Transverse colon (tissue), 4 donors: ENCODE measurements at regions of chr2 and their contacts with region 1.

Region 1: DNA sequence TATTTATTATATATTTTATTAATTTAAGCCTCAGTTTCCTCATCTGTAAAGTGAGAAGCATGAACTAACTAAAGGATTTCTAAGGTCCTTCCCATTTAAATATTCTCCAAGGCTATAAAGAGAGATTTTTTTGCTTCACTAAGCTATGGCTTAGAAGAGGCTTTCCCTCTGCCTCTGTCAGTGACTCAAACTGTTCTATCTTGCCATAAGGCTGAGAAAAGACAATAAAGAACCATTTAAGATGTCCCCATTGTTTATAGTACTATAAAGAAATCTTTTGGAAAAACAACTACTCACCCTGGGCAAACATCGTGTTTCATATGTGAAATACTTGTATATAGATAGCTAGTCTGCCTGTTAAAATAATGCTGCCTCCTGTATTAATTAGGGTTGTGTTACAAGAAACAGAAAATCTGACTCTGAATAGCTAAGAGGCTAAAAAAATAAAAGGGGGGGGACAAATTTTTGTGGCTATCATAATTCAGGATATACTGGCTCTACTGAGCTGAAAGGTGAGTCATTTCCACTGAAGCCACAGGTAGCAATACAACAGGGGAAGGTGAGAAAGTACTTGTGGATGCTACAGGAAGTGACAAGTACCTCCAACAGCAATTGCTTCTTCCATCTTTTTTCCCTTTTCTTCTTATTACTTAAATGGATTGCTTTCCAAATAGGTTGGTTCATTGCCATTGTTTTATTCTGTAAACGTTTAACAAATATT is 25.4 kb downstream of the EPHA4 start:
- DNase-seq: no peak
- H3K4me3 ChIP-seq: no peak overlapping the region
- H3K27ac ChIP-seq: peak overlapping the region in 1 of 4 donors; percentile 11
- H3K4me1 ChIP-seq: peaks cover 0 to 8% (median 3%) of the 10 kb centered on the region in 4 donors
- H3K27me3 ChIP-seq: no peaks in the 10 kb centered on the region
- CTCF ChIP-seq: no peak
- EP300 ChIP-seq: no peak
- POLR2A ChIP-seq: no peak

Region 2: DNA sequence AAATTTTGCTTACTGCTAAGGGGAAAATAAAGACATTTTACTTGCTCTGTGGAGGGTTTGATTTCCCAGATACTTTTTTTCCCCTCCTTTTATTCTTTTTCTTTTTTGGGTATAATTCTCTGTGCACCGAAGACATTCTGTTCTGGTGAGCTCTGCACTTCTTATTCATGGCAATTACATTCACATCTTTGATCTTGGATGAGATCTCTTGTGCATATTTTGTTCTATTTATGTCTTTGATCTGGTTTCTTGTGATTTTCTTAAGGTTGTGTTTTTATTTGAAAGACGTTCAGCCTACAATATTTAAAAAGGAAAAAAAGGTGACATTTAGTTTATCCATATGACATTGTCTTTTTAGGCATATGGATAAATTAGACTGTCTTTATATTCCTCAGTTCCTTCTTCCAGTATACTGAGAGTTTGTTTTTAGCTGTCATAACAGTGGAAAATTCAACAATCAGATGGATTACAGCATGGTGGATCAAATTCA is 59.1 kb after region 1 on chr2:
- in situ Hi-C with region 1: no loop called
- intact Hi-C with region 1: loop called (anchors 2 kb)
- DNase-seq: no peak
- H3K4me3 ChIP-seq: no peak overlapping the region
- H3K27ac ChIP-seq: no peak overlapping the region
- H3K4me1 ChIP-seq: no peaks in the 10 kb centered on the region
- H3K27me3 ChIP-seq: no peaks in the 10 kb centered on the region
- CTCF ChIP-seq: no peak
- EP300 ChIP-seq: no peak
- POLR2A ChIP-seq: no peak